HepG2 (cell line): ENCODE measurements at regions of chr17 and their contacts with region 1.

Region 1: GRCh38 chr17:68205251-68205807 is 42.5 kb upstream of the AMZ2 start:
- DNase-seq: peak; percentile 80
- ATAC-seq: peak; percentile 88
- H3K4me3 ChIP-seq: peak overlapping the region; percentile 68 to 85 (median 84); a peak in 5 of 6 replicates
- H3K27ac ChIP-seq: peak overlapping the region; percentile 22
- H3K4me1 ChIP-seq: peaks cover 35% of the 10 kb centered on the region
- H3K27me3 ChIP-seq: peaks cover 0 to 27% of the 10 kb centered on the region in 2 experiments; a peak in 4 of 5 replicates
- CTCF ChIP-seq: peak; percentile 95
- EP300 ChIP-seq: 0 out of 4 replicates have a peak, but pooled peaks have one; percentile 5 to 14
- POLR2A ChIP-seq: peak in 1 of 2 experiments; percentile 64; a peak in 3 of 4 replicates
- RAD21 ChIP-seq: peak; percentile 89

Region 2: DNA sequence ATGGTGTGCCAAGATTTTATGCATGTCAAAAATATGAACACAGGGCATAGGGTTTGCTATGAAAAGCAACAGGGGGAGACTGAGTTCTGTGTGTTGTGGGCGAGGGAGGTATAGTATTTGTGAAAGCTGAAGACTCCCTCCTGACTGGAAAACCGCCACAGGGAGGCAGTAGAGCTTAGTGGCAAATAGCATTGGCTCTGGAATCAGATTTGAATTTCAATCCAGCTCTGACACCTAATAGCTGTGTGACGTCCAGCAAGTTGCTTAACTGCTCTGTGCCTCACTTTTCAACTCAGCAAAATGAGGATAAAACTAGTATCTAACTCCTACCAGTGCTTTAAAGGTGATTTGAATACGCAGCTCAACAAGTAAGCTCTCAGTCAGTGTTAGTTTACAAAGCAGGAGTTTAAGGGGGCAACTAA is 147.8 kb before region 1 on chr17:
- CTCF ChIA-PET with region 1: no interaction called
- POLR2A ChIA-PET with region 1: no interaction called
- in situ Hi-C with region 1: no loop called
- intact Hi-C with region 1: loop called (anchors 2 kb)
- DNase-seq: no peak
- ATAC-seq: peak; percentile 64
- H3K4me3 ChIP-seq: no peak overlapping the region
- H3K27ac ChIP-seq: no peak overlapping the region
- H3K4me1 ChIP-seq: peaks cover 27% of the 10 kb centered on the region
- H3K27me3 ChIP-seq: no peaks in the 10 kb centered on the region
- CTCF ChIP-seq: peak; percentile 50
- EP300 ChIP-seq: no peak
- POLR2A ChIP-seq: no peak
- RAD21 ChIP-seq: 0 out of 2 replicates have a peak, but pooled peaks have one; percentile 50

Region 3: DNA sequence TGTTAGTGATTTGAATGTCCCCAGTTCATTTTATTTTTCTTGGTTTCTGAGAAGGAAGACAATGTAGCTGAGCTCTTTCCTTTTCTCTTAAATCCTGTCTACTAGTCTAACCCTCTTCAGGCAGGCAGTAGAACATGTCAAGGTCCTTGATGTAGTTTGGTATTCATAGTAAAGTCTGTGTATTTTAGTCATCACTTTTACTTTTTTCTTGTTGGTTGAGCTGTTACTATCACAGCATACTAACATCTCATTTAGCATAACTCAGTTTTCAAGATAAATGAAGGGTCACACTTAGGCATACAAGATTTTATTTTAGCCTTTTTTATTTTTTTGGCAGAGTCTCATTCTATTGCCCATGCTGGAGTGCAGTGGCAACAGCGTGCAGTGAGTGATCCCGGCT is 99.2 kb before region 1 on chr17:
- CTCF ChIA-PET with region 1: no interaction called
- POLR2A ChIA-PET with region 1: no interaction called
- in situ Hi-C with region 1: no loop called
- intact Hi-C with region 1: no loop called
- DNase-seq: no peak
- ATAC-seq: no peak
- H3K4me3 ChIP-seq: no peak overlapping the region
- H3K27ac ChIP-seq: no peak overlapping the region
- H3K4me1 ChIP-seq: peaks cover 18% of the 10 kb centered on the region
- H3K27me3 ChIP-seq: no peaks in the 10 kb centered on the region; a peak in 1 of 5 replicates
- CTCF ChIP-seq: no peak
- EP300 ChIP-seq: no peak
- POLR2A ChIP-seq: no peak
- RAD21 ChIP-seq: no peak

Region 4: GRCh38 chr17:68172461-68172954 is 32.8 kb before region 1 on chr17:
- CTCF ChIA-PET with region 1: interaction called, 22 read pairs
- POLR2A ChIA-PET with region 1: no interaction called
- in situ Hi-C with region 1: no loop called
- intact Hi-C with region 1: loop called (anchors 1 kb)
- DNase-seq: peak; percentile 67
- ATAC-seq: peak; percentile 68
- H3K4me3 ChIP-seq: no peak overlapping the region
- H3K27ac ChIP-seq: no peak overlapping the region
- H3K4me1 ChIP-seq: peaks cover 37% of the 10 kb centered on the region
- H3K27me3 ChIP-seq: peaks cover 0 to 9% of the 10 kb centered on the region in 2 experiments; a peak in 2 of 5 replicates
- CTCF ChIP-seq: peak; percentile 97
- EP300 ChIP-seq: no peak
- POLR2A ChIP-seq: no peak
- RAD21 ChIP-seq: peak; percentile 94

Region 5: GRCh38 chr17:68231541-68231940 is 26.2 kb after region 1 on chr17:
- CTCF ChIA-PET with region 1: no interaction called
- POLR2A ChIA-PET with region 1: no interaction called
- in situ Hi-C with region 1: no loop called
- intact Hi-C with region 1: no loop called
- DNase-seq: no peak
- ATAC-seq: no peak
- H3K4me3 ChIP-seq: no peak overlapping the region
- H3K27ac ChIP-seq: no peak overlapping the region
- H3K4me1 ChIP-seq: peaks cover 21% of the 10 kb centered on the region
- H3K27me3 ChIP-seq: no peaks in the 10 kb centered on the region
- CTCF ChIP-seq: no peak
- EP300 ChIP-seq: no peak
- POLR2A ChIP-seq: no peak
- RAD21 ChIP-seq: no peak

Region 6: GRCh38 chr17:68247445-68248198 is 42.3 kb after region 1 on chr17 and contains the start of gene AMZ2:
- CTCF ChIA-PET with region 1: no interaction called
- POLR2A ChIA-PET with region 1: interaction called, 6 read pairs
- in situ Hi-C with region 1: no loop called
- intact Hi-C with region 1: loop called (anchors 5 kb)
- DNase-seq: peak; percentile 88
- ATAC-seq: peak; percentile 99
- H3K4me3 ChIP-seq: peak within 1 kb of the TSS; percentile 77 to 94 (median 80)
- H3K27ac ChIP-seq: peak within 1 kb of the TSS; percentile 77
- H3K4me1 ChIP-seq: peaks cover 27% of the 10 kb centered on the region
- H3K27me3 ChIP-seq: no peaks in the 10 kb centered on the region; a peak in 2 of 5 replicates
- CTCF ChIP-seq: peak; percentile 29
- EP300 ChIP-seq: no peak
- POLR2A ChIP-seq: peak; percentile 90 to 93
- RAD21 ChIP-seq: peak; percentile 44
- total RNA-seq, gene AMZ2: 86.9 and 99.9 TPM in 2 replicates